AG04450 (cell line): ENCODE measurements at regions of chr19 and their contacts with region 1.

Region 1: DNA sequence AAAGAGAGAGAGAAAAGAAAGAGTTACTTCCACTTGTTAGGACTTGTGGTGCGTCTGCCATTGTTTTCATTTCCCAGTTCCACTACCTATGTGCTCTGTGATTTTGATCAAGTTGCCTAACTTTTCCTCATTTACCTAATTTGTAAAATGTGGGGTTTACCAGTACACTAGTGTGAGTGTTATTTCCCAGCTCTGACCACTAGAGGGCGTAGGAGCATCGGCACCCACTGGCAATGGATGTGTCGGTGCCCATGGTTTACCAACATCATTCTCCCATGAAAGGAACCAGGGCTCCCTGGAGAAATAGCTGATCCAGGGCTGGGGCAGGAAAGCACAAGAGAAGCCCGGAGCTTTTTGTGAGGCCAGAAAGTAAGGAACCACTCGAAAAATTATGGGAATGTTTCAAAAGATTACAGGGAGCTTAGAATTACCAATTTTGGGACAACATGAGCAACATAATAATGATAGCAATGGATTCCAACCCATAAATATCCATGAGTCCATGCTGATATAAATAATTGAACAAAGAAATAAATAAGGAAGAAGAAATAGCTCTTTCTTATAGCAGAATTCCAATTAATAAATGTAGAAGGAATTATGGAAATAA is 15.1 kb upstream of the CEACAM4 start:
- DNase-seq: peak; percentile 6
- H3K4me3 ChIP-seq: no peak overlapping the region
- H3K27ac ChIP-seq: no peak overlapping the region
- H3K27me3 ChIP-seq: no peaks in the 10 kb centered on the region
- CTCF ChIP-seq: peak; percentile 87

Region 2: GRCh38 chr19:41626877-41627276 is 15.1 kb before region 1 on chr19 and contains the start of gene CEACAM4:
- CTCF ChIA-PET with region 1: interaction called, 15 read pairs
- POLR2A ChIA-PET with region 1: no interaction called
- DNase-seq: no peak
- H3K4me3 ChIP-seq: no peak within 1 kb of the TSS
- H3K27ac ChIP-seq: no peak within 1 kb of the TSS
- H3K27me3 ChIP-seq: no peaks in the 10 kb centered on the region
- CTCF ChIP-seq: no peak
- polyA plus RNA-seq, gene CEACAM4: not detected in 2 replicates

Region 3: DNA sequence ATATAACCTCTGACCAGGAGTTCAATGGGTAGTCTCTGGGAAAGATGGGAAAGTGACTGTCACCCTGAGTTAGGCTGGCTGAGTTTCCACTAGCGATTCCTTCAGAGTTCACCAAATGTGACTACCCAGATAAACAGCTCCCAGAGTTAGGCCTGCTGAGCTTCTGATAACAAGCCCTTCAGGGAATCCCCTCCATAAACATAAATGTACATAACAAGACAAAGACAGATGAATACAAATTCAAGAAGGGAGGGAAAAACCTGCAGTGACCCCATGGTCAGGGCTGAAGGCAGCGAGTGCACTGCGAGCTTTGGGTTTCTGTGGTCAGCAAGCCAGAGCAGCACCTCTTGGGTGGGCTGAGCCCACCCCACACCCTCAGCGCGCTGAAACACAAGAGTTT is 10.3 kb after region 1 on chr19:
- CTCF ChIA-PET with region 1: interaction called, 42 read pairs
- POLR2A ChIA-PET with region 1: no interaction called
- DNase-seq: no peak
- H3K4me3 ChIP-seq: no peak overlapping the region
- H3K27ac ChIP-seq: no peak overlapping the region
- H3K27me3 ChIP-seq: no peaks in the 10 kb centered on the region
- CTCF ChIP-seq: no peak

Region 4: DNA sequence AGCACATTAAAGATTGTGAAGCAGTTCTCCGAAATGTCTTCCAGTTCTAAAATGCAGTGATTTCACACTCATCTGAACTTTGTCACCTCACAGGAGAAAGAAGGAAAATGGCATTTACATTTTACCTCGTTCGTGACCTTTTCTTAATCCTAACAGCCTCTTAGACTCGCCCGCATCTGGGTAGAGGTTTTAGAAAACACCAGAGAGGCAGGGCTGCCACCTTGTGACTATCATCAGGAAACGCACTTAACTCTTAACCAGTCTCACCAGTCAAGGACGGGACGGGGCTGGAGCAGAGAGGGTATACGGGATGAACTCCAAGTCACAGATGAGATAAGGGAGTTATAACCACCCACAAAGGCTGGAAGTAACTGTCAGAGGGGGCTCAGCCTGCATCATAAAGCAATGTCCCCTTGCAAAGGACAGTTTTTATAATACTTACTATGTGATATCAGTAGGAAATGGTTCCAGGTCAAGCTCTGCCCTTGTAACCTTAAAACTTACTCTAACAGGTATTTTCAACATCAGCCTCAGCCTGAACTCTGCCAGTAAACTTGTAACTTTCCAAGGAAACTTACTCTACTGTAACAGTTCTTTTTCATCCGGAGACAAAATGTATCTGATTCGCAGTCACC is 104.7 kb after region 1 on chr19:
- CTCF ChIA-PET with region 1: interaction called, 17 read pairs
- POLR2A ChIA-PET with region 1: no interaction called
- DNase-seq: no peak
- H3K4me3 ChIP-seq: no peak overlapping the region
- H3K27ac ChIP-seq: no peak overlapping the region
- H3K27me3 ChIP-seq: peaks cover 3% of the 10 kb centered on the region
- CTCF ChIP-seq: peak; percentile 57

Region 5: GRCh38 chr19:41753936-41754529 is 112.1 kb after region 1 on chr19:
- CTCF ChIA-PET with region 1: interaction called, 15 read pairs
- POLR2A ChIA-PET with region 1: no interaction called
- DNase-seq: no peak
- H3K4me3 ChIP-seq: no peak overlapping the region
- H3K27ac ChIP-seq: no peak overlapping the region
- H3K27me3 ChIP-seq: no peaks in the 10 kb centered on the region
- CTCF ChIP-seq: peak; percentile 69

Region 6: GRCh38 chr19:41785653-41786052 is 143.7 kb after region 1 on chr19:
- CTCF ChIA-PET with region 1: interaction called, 10 read pairs
- POLR2A ChIA-PET with region 1: no interaction called
- DNase-seq: peak; percentile 29
- H3K4me3 ChIP-seq: no peak overlapping the region
- H3K27ac ChIP-seq: no peak overlapping the region
- H3K27me3 ChIP-seq: peaks cover 8% of the 10 kb centered on the region
- CTCF ChIP-seq: peak; percentile 80

Region 7: GRCh38 chr19:41920882-41921576 is 279.0 kb after region 1 on chr19:
- CTCF ChIA-PET with region 1: no interaction called
- POLR2A ChIA-PET with region 1: no interaction called
- DNase-seq: no peak
- H3K4me3 ChIP-seq: no peak overlapping the region
- H3K27ac ChIP-seq: no peak overlapping the region
- H3K27me3 ChIP-seq: peaks cover 65% of the 10 kb centered on the region
- CTCF ChIP-seq: no peak